Activated CD4-positive, alpha-beta T cell treated with anti-CD3 and anti-CD28 coated beads, Interleukin-2, amount 10 ng/mL, durations not matched to agents 7 days and 5 days (primary cell): ENCODE measurements at regions of chr12 and their contacts with region 1.

Region 1: DNA sequence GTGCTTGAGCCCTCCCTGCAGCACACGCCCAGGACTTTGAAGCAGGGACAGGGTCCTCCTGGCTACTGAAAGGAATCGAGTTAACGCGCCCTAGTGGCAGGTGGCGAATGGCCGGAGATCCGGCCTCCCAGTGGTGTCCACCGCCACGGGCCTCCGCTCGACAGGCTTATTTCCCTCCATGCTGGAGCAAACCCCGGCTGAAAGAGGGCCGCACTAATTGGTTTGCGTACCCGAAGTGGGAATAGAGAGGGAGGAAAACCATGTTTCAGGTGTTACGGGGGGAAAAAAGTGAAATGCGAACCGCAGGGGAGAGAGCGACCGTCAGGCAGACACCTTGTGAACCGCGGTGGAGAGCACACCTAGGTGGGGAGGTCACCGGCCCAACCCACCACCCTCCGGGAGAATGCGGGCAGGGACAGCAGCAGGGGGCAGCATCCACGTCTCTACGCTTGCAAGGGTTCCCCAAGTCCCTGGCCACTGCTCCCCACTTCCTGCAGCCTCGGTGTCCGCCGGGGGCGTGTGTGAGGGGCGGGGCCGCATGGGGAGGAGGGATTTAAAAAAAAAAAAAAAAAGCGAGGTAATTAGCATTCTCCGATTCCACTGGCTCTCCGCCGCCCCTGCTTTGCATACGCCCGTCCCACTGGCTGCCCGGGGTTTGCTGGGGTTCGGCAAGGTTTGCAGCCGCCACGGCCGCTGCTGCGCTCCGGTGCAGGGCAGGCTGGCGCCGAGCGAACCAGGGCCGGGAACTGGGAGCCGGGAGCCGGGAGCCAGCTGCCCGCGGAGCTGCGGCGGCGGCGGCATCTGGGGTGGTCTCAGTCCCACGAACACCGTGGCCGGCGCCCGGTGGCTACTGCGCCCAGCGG is 224.6 kb upstream of the CRY1 start:
- DNase-seq: peak; percentile 93
- H3K4me3 Mint-ChIP-seq: peak overlapping the region; percentile 79
- H3K27ac Mint-ChIP-seq: no peak overlapping the region
- H3K4me1 Mint-ChIP-seq: peaks cover 32% of the 10 kb centered on the region
- H3K27me3 Mint-ChIP-seq: peaks cover 37% of the 10 kb centered on the region

Region 2: GRCh38 chr12:107329569-107330324 is 11.8 kb after region 1 on chr12:
- CTCF ChIA-PET with region 1: interaction called, 15 read pairs
- POLR2A ChIA-PET with region 1: no interaction called
- DNase-seq: no peak
- H3K4me3 Mint-ChIP-seq: no peak overlapping the region
- H3K27ac Mint-ChIP-seq: no peak overlapping the region
- H3K4me1 Mint-ChIP-seq: peaks cover 74% of the 10 kb centered on the region
- H3K27me3 Mint-ChIP-seq: no peaks in the 10 kb centered on the region

Region 3: GRCh38 chr12:107372229-107372658 is 54.3 kb after region 1 on chr12:
- CTCF ChIA-PET with region 1: interaction called, 3 read pairs
- POLR2A ChIA-PET with region 1: interaction called, 16 read pairs
- DNase-seq: peak; percentile 68
- H3K4me3 Mint-ChIP-seq: peak overlapping the region; percentile 43
- H3K27ac Mint-ChIP-seq: peak overlapping the region; percentile 98
- H3K4me1 Mint-ChIP-seq: peaks cover 86% of the 10 kb centered on the region
- H3K27me3 Mint-ChIP-seq: no peaks in the 10 kb centered on the region